ENCODE measurements at regions of chr18 and their contacts with region 1.

Region 1: GRCh38 chr18:61606759-61607158 is 273.5 kb downstream of the CDH20 start:
- DNase-seq: peak; percentile 89
- H3K4me3 ChIP-seq: peak overlapping the region; percentile 47 to 83 (median 71)
- H3K27ac ChIP-seq: peak overlapping the region; percentile 76
- H3K4me1 ChIP-seq: peaks cover 28% of the 10 kb centered on the region
- H3K27me3 ChIP-seq: no peaks in the 10 kb centered on the region
- CTCF ChIP-seq: no peak

Region 2: GRCh38 chr18:59966913-59967312 is 1639.8 kb before region 1 on chr18:
- CTCF ChIA-PET with region 1: interaction called, 10 read pairs
- dilution Hi-C with region 1: no loop called
- in situ Hi-C with region 1: no loop called
- intact Hi-C with region 1: no loop called
- DNase-seq: peak; percentile 67
- H3K4me3 ChIP-seq: no peak overlapping the region
- H3K27ac ChIP-seq: peak overlapping the region; percentile 12
- H3K4me1 ChIP-seq: peaks cover 14% of the 10 kb centered on the region
- H3K27me3 ChIP-seq: no peaks in the 10 kb centered on the region
- CTCF ChIP-seq: no peak

Region 3: DNA sequence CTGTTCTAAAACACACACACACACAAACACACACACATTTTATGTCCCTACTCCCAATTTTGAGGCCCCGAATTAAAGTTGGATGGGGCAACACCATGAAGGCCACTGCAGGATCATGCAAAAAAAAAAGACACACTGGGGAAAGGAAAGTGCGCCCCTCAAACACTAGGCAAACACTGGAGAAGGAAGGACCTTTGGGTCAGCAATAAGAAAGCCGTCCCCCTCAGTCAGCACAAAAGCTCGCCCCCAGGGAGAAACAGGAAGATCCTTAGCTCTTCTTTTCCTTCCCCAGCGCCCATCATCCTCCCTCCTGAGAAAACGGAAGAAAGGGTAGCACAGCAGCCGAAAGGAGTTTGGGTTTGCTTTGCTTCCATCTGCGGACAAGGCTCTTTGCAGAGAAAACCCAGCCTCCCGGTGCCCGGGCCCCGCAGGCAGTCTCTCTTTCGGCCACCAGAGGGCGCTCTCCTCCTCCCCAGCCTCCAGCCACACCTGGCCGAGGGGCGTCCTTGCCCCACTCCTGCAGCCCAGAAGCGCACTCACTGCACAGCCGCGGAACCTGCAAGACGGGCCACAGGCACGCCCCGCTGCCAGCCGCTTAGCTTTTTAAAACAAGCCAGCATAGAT is 25.1 kb before region 1 on chr18:
- CTCF ChIA-PET with region 1: no interaction called
- dilution Hi-C with region 1: no loop called
- in situ Hi-C with region 1: no loop called
- intact Hi-C with region 1: loop called (anchors 2 kb)
- DNase-seq: peak; percentile 59
- H3K4me3 ChIP-seq: peak overlapping the region; percentile 44 to 56 (median 50)
- H3K27ac ChIP-seq: no peak overlapping the region
- H3K4me1 ChIP-seq: peaks cover 10% of the 10 kb centered on the region
- H3K27me3 ChIP-seq: no peaks in the 10 kb centered on the region
- CTCF ChIP-seq: peak; percentile 85 to 98

Region 4: DNA sequence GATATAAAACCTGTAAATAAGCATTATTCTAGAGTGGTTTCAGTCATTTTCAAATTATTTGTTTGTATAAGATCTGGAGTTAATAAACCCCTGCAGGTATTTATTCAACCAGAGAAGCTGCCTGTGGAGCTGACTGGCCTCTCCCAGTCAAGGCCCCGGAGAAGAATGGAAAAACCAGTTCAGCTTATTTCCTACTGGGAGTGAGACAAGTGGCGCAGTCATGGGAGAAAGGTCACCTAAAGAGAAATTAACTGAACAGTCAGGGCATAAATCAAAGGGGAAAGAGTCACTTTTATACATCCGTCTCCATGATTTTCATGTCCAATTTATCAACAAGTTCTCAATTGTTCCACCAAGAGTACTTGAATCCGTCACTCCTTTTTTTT is 45.1 kb after region 1 on chr18:
- CTCF ChIA-PET with region 1: interaction called, 11 read pairs
- dilution Hi-C with region 1: no loop called
- in situ Hi-C with region 1: no loop called
- intact Hi-C with region 1: no loop called
- DNase-seq: no peak
- H3K4me3 ChIP-seq: no peak overlapping the region
- H3K27ac ChIP-seq: no peak overlapping the region
- H3K4me1 ChIP-seq: no peaks in the 10 kb centered on the region
- H3K27me3 ChIP-seq: peaks cover 2% of the 10 kb centered on the region
- CTCF ChIP-seq: no peak

Region 5: GRCh38 chr18:61949946-61950345 is 343.2 kb after region 1 on chr18:
- CTCF ChIA-PET with region 1: no interaction called
- dilution Hi-C with region 1: no loop called
- in situ Hi-C with region 1: no loop called
- intact Hi-C with region 1: loop called (anchors 1 kb)
- DNase-seq: peak; percentile 100
- H3K4me3 ChIP-seq: peak overlapping the region; percentile 43 to 55 (median 47)
- H3K27ac ChIP-seq: peak overlapping the region; percentile 99
- H3K4me1 ChIP-seq: peaks cover 60% of the 10 kb centered on the region
- H3K27me3 ChIP-seq: no peaks in the 10 kb centered on the region
- CTCF ChIP-seq: no peak

Region 6: GRCh38 chr18:61992285-61992684 is 385.5 kb after region 1 on chr18:
- CTCF ChIA-PET with region 1: no interaction called
- dilution Hi-C with region 1: no loop called
- in situ Hi-C with region 1: no loop called
- intact Hi-C with region 1: loop called (anchors 10 kb)
- DNase-seq: peak; percentile 80
- H3K4me3 ChIP-seq: no peak overlapping the region
- H3K27ac ChIP-seq: peak overlapping the region; percentile 61
- H3K4me1 ChIP-seq: peaks cover 53% of the 10 kb centered on the region
- H3K27me3 ChIP-seq: no peaks in the 10 kb centered on the region
- CTCF ChIP-seq: no peak